ENCODE measurements at regions of chr1 and their contacts with region 1.

Region 1: DNA sequence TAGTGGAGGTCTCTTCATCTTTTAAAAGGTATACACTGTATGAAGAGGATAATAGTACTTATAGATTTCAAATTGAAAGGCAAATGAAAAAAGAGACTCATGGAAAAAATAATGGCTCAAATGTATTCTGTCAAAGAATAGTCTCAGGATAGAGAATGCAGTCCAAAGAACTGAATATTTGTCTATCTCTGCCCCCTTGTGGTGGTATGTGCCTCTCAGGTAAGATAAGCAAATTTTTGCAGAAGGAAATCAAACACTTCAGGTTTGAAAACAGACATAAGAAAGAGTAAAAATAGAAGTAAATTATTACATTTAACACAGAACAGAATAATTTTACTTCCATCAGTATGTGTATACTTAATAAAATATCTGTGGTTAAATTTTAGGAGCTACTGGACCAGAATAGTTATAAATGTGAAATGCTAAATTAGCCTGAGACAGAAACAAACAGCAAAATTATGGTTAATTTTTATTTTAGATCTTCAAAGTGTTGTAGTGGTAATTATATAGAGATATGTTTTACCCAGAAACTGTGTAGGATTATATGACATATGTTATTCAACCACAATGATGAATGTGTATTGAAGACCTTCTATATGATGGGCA is 164.4 kb upstream of the PALMD start:
- DNase-seq: peak; percentile 59
- H3K4me3 ChIP-seq: no peak overlapping the region
- H3K27ac ChIP-seq: no peak overlapping the region
- H3K4me1 ChIP-seq: no peaks in the 10 kb centered on the region
- CTCF ChIP-seq: peak; percentile 91

Region 2: GRCh38 chr1:98794196-98794886 is 687.2 kb before region 1 on chr1:
- CTCF ChIA-PET with region 1: no interaction called
- POLR2A ChIA-PET with region 1: no interaction called
- intact Hi-C with region 1: loop called (anchors 10 kb)
- DNase-seq: peak; percentile 58
- H3K4me3 ChIP-seq: no peak overlapping the region
- H3K27ac ChIP-seq: no peak overlapping the region
- H3K4me1 ChIP-seq: no peaks in the 10 kb centered on the region
- CTCF ChIP-seq: peak; percentile 87

Region 3: DNA sequence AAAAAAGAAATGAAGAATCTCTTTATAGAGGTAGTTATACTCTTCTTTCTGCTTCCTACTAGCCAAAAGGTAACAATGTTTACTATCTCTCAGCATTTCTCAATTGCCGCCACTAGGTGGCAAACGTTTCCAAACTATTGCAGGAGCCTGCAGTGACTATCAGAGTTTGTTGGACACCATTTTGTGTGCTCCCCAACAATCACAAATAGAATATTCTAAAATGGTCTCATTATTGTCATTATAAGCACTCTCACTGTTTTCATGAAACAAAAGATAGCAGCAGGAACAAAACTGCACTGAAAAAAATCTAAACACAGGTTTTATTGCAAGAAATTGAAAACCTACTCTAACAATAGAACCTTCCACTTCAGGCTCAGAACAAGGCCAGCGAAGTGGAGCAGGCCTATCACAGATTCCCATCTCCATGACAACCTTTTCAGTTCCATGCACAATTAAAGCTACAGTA is 301.1 kb before region 1 on chr1:
- CTCF ChIA-PET with region 1: no interaction called
- POLR2A ChIA-PET with region 1: no interaction called
- intact Hi-C with region 1: loop called (anchors 1 kb)
- DNase-seq: peak; percentile 72
- H3K4me3 ChIP-seq: no peak overlapping the region
- H3K27ac ChIP-seq: no peak overlapping the region
- H3K4me1 ChIP-seq: no peaks in the 10 kb centered on the region
- CTCF ChIP-seq: peak; percentile 93